CD8-positive, alpha-beta memory T cell (primary cell): ENCODE measurements at regions of chr16 and their contacts with region 1.

Region 1: DNA sequence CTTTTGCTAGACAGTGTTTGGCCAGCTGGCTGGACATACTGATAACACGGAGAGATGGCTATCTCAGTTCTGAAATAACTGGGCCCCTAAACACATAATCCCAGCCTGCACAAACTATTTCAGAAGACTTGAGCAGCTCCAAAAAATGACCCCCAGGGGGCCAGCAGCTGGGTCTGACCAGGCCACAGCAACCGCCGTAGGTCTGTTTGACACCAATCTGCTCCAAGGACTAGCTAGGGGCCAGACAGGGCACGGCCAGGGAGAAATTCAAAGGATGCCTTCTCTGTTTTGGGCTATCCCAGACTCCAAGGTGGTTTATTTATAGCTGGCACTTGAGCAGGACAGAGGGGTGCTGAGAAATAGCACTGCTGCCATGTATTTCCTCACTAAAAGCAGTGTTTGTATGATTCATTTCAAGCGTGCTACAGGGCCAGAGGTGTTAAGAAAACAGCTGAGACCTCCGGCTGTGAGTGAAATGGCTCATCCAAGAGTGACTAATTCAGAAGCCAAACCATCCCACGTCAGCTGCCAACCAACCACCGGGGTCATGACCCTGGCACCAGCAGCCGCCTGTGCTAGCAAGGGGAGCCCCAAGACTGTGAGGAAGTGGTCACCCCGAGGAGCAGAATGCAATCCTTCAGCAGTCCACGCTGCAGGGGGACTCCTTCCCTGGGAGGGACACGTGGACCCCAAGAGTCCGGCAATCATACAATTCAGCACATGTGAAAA is 5.7 kb downstream of the GGA2 start:
- DNase-seq: peak; percentile 14 to 90 (median 70)
- H3K4me3 ChIP-seq: peak overlapping the region; percentile 27
- H3K4me3 Mint-ChIP-seq: peak overlapping the region; percentile 41 to 88 (median 77)
- H3K27ac ChIP-seq: peak overlapping the region; percentile 64
- H3K27ac Mint-ChIP-seq: peak overlapping the region; percentile 86 to 97 (median 95)
- H3K4me1 ChIP-seq: peaks cover 56% of the 10 kb centered on the region
- H3K4me1 Mint-ChIP-seq: peaks cover 74 to 97% (median 85%) of the 10 kb centered on the region in 3 donors
- H3K27me3 ChIP-seq: no peaks in the 10 kb centered on the region
- H3K27me3 Mint-ChIP-seq: no peaks in the 10 kb centered on the region

Region 2: GRCh38 chr16:23482778-23483177 is 21.8 kb before region 1 on chr16:
- CTCF ChIA-PET with region 1: interaction called, 4 read pairs
- POLR2A ChIA-PET with region 1: interaction called, 11 read pairs
- DNase-seq: peak; percentile 23 to 91 (median 74)
- H3K4me3 ChIP-seq: no peak overlapping the region
- H3K4me3 Mint-ChIP-seq: peak overlapping the region; percentile 49 to 89 (median 77)
- H3K27ac ChIP-seq: peak overlapping the region; percentile 82
- H3K27ac Mint-ChIP-seq: peak overlapping the region; percentile 92 to 100 (median 99)
- H3K4me1 ChIP-seq: peaks cover 13% of the 10 kb centered on the region
- H3K4me1 Mint-ChIP-seq: peaks cover 18 to 32% (median 19%) of the 10 kb centered on the region in 3 donors
- H3K27me3 ChIP-seq: no peaks in the 10 kb centered on the region
- H3K27me3 Mint-ChIP-seq: no peaks in the 10 kb centered on the region

Region 3: GRCh38 chr16:23570992-23571632 is 66.5 kb after region 1 on chr16:
- CTCF ChIA-PET with region 1: no interaction called
- POLR2A ChIA-PET with region 1: no interaction called
- DNase-seq: peak in 1 of 5 donors; percentile 29
- H3K4me3 ChIP-seq: no peak overlapping the region
- H3K4me3 Mint-ChIP-seq: no peak overlapping the region
- H3K27ac ChIP-seq: no peak overlapping the region
- H3K27ac Mint-ChIP-seq: peak overlapping the region in 1 of 8 donors; percentile 9
- H3K4me1 ChIP-seq: no peaks in the 10 kb centered on the region
- H3K4me1 Mint-ChIP-seq: peaks cover 0 to 4% (median 0%) of the 10 kb centered on the region in 3 donors
- H3K27me3 ChIP-seq: no peaks in the 10 kb centered on the region
- H3K27me3 Mint-ChIP-seq: no peaks in the 10 kb centered on the region

Region 4: GRCh38 chr16:23584186-23585076 is 79.8 kb after region 1 on chr16:
- CTCF ChIA-PET with region 1: no interaction called
- POLR2A ChIA-PET with region 1: no interaction called
- DNase-seq: no peak
- H3K4me3 ChIP-seq: no peak overlapping the region
- H3K4me3 Mint-ChIP-seq: no peak overlapping the region
- H3K27ac ChIP-seq: no peak overlapping the region
- H3K27ac Mint-ChIP-seq: peak overlapping the region in 2 of 8 donors; percentile 47 to 66
- H3K4me1 ChIP-seq: no peaks in the 10 kb centered on the region
- H3K4me1 Mint-ChIP-seq: peaks cover 0 to 3% (median 3%) of the 10 kb centered on the region in 3 donors
- H3K27me3 ChIP-seq: no peaks in the 10 kb centered on the region
- H3K27me3 Mint-ChIP-seq: no peaks in the 10 kb centered on the region